Left cardiac atrium (tissue), 4 donors: ENCODE measurements at regions of chr1 and their contacts with region 1.

Region 1: GRCh38 chr1:27097484-27097917 is 57.4 kb downstream of the SLC9A1 start:
- DNase-seq: peak; percentile 81
- ATAC-seq: peak; percentile 45 to 48

Region 2: DNA sequence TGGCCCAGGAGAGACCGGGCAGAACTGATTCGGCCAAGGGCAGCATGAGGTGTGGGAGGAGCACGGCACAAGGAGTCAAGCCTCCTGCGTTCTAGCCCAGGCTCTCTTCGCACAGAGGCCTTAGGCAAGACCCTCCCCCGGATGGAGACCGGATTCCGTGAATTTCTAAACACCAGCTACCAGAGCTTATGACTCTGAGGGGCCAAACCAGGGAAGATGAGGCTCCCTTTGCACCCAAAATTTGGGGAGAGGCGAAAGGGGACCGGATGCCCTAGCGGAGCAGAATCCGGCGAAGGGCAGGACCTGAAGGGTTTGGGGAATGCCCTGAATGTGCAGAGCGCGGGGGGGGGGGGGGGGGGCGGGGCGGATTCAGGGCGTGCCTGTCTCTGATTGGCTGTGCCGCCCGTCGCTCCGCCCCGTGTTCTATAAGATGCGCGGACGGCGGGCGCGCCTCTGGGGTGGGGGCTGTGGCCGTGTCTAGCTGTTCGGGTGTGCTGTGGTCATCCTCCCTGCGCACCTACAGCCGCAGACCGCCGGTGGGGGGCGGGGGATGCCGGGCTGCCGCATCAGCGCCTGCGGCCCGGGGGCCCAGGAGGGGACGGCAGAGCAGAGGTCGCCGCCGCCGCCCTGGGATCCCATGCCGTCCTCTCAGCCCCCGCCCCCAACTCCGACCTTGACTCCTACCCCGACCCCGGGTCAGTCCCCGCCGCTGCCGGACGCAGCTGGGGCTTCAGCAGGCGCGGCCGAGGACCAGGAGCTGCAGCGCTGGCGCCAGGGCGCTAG is 104.1 kb before region 1 on chr1 and contains the start of gene TRNP1:
- intact Hi-C with region 1: loop called (anchors 5 to 10 kb)
- DNase-seq: peak; percentile 78
- ATAC-seq: peak; percentile 77 to 81
- total RNA-seq, gene TRNP1: 40.6 to 45.2 TPM

Region 3: GRCh38 chr1:26999440-26999987 is 98.0 kb before region 1 on chr1:
- intact Hi-C with region 1: loop called (anchors 5 to 10 kb)
- DNase-seq: peak; percentile 69
- ATAC-seq: peak; percentile 69 to 77

Region 4: GRCh38 chr1:27145934-27146354 is 48.4 kb after region 1 on chr1:
- intact Hi-C with region 1: no loop called
- DNase-seq: no peak
- ATAC-seq: peak; percentile 6 to 80

Region 5: GRCh38 chr1:27218736-27219135 is 121.2 kb after region 1 on chr1:
- intact Hi-C with region 1: no loop called
- DNase-seq: no peak
- ATAC-seq: no peak